ENCODE measurements at regions of chr11 and their contacts with region 1.

Region 1: GRCh38 chr11:67428052-67428914 is at the start of gene RPS6KB2:
- DNase-seq: peak; percentile 99
- ATAC-seq: peak; percentile 81
- H3K4me3 Mint-ChIP-seq: peak within 1 kb of the TSS; percentile 90
- H3K27ac Mint-ChIP-seq: peak within 1 kb of the TSS; percentile 98
- H3K4me1 Mint-ChIP-seq: peaks cover 37% of the 10 kb centered on the region
- H3K27me3 Mint-ChIP-seq: no peaks in the 10 kb centered on the region
- total RNA-seq, gene RPS6KB2: 53.4 to 57.2 TPM

Region 2: GRCh38 chr11:67439321-67439883 is 11.1 kb after region 1 on chr11:
- CTCF ChIA-PET with region 1: interaction called, 5 read pairs
- POLR2A ChIA-PET with region 1: interaction called, 3 read pairs
- intact Hi-C with region 1: loop called (anchors 1 kb)
- DNase-seq: peak; percentile 77
- ATAC-seq: peak; percentile 2
- H3K4me3 Mint-ChIP-seq: peak overlapping the region; percentile 84
- H3K27ac Mint-ChIP-seq: peak overlapping the region; percentile 97
- H3K4me1 Mint-ChIP-seq: peaks cover 49% of the 10 kb centered on the region
- H3K27me3 Mint-ChIP-seq: no peaks in the 10 kb centered on the region

Region 3: GRCh38 chr11:67482825-67483798 is 54.8 kb after region 1 on chr11 and contains the start of gene AIP:
- CTCF ChIA-PET with region 1: no interaction called
- POLR2A ChIA-PET with region 1: no interaction called
- intact Hi-C with region 1: loop called in 1 of 2 experiments (anchors 1 kb)
- DNase-seq: peak; percentile 99
- ATAC-seq: peak; percentile 72
- H3K4me3 Mint-ChIP-seq: peak within 1 kb of the TSS; percentile 86
- H3K27ac Mint-ChIP-seq: peak within 1 kb of the TSS; percentile 99
- H3K4me1 Mint-ChIP-seq: peaks cover 50% of the 10 kb centered on the region
- H3K27me3 Mint-ChIP-seq: no peaks in the 10 kb centered on the region
- total RNA-seq, gene AIP: 142 to 144 TPM

Region 4: GRCh38 chr11:67606492-67607201 is 178.4 kb after region 1 on chr11 and contains the start of gene NDUFV1:
- CTCF ChIA-PET with region 1: no interaction called
- POLR2A ChIA-PET with region 1: no interaction called
- intact Hi-C with region 1: loop called in 1 of 2 experiments (anchors 1 kb)
- DNase-seq: peak; percentile 98
- ATAC-seq: peak; percentile 100
- H3K4me3 Mint-ChIP-seq: peak within 1 kb of the TSS; percentile 92
- H3K27ac Mint-ChIP-seq: peak within 1 kb of the TSS; percentile 90
- H3K4me1 Mint-ChIP-seq: peaks cover 16% of the 10 kb centered on the region
- H3K27me3 Mint-ChIP-seq: peaks cover 9% of the 10 kb centered on the region
- total RNA-seq, gene NDUFV1: 253 to 287 TPM

Region 5: DNA sequence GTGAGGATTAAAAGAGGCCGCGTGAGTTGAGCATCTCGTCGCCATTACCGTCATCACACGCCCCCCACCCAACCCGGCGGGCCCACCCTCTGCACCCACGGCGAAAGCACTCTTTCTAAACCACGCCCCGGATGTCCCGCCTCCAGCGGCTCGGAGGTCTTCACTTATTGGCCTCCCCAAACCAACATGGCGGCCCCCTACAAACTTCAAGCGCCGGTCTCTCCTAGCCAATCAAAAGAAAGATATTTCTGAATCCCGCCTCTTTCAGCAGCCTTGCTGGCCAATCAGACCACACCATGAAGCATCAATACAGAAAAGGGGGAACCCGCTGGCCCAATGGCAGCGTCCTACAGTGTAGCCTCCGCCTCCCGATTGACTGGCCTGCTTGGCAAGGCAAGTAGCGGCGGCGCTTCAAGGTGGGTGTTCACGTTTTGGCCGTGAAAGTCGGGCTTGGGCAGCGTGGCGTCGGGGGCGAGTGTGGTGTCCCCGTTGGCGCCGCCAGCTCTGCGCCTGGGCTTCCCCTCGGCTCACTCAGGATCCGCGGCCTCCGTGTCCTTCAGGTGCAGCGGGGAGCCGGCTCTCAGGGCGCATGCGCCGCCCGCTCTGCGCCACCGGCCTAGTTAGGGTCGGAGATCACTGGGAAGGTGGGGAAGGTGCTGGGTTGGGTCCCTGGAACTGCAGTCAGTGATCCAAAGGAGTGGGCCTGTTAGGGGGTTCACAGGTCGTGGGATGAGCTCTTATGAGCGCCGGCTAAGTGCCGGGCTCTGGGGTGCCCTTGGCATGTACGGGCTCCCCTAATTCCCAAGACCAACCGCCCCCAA is 602.2 kb after region 1 on chr11 and contains the start of gene NDUFS8:
- CTCF ChIA-PET with region 1: no interaction called
- POLR2A ChIA-PET with region 1: no interaction called
- intact Hi-C with region 1: loop called in 1 of 2 experiments (anchors 2 kb)
- DNase-seq: peak; percentile 97
- ATAC-seq: peak; percentile 99
- H3K4me3 Mint-ChIP-seq: peak within 1 kb of the TSS; percentile 96
- H3K27ac Mint-ChIP-seq: peak within 1 kb of the TSS; percentile 95
- H3K4me1 Mint-ChIP-seq: peaks cover 26% of the 10 kb centered on the region
- H3K27me3 Mint-ChIP-seq: no peaks in the 10 kb centered on the region
- total RNA-seq, gene NDUFS8: 108 to 113 TPM

Measured in activated CD4-positive, alpha-beta T cell treated with anti-CD3 and anti-CD28 coated beads for 36 hours (primary cell).